Vagina (tissue), 2 donors: ENCODE measurements at regions of chr1 and their contacts with region 1.

Region 1: GRCh38 chr1:11979851-11980675 is at the start of gene MFN2:
- DNase-seq: peak in 1 of 2 donors; percentile 99
- H3K4me3 ChIP-seq: peak within 1 kb of the TSS; percentile 90 to 96
- H3K27ac ChIP-seq: peak within 1 kb of the TSS; percentile 96
- H3K4me1 ChIP-seq: peaks cover 46% of the 10 kb centered on the region
- H3K27me3 ChIP-seq: no peaks in the 10 kb centered on the region
- CTCF ChIP-seq: no peak
- POLR2A ChIP-seq: peak in 1 of 2 donors; percentile 18
- total RNA-seq, gene MFN2: 61.6 TPM

Region 2: DNA sequence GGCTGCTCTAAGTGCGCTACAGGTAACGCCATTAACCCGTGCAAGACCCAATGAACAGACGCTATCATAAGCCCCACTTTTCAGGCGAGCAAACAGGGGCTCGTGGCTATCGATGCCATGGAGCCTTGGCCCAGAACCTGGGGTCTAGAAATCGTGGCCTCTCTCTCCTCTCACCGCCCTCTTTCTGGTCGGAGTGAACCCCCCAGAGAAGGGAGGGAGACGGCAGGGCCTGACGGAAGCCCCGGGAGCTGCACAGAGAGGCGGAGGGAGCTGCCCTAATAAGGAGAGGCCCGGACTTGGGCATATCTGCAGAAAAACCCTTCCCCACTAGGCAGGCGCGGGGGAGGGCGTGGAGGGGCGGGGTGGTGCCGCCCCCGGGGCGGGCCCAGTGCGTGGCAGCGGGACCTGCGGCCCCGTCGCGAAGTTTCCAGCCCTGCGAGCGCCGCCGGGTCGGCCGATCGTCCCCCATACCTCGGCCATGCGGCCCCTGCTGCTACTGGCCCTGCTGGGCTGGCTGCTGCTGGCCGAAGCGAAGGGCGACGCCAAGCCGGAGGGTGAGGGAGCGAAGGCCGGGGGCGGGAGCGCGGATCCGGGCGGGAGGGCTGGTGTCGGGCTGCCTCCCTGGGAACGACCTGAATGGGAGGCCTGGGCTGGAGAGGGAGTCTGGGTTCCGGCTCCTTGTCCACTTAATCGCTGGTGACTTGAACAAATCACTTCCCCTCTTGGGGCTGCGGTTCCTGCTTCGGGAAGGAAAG is 45.6 kb before region 1 on chr1 and contains the start of gene PLOD1:
- intact Hi-C with region 1: loop called (anchors 2 kb)
- DNase-seq: no peak
- H3K4me3 ChIP-seq: peak within 1 kb of the TSS; percentile 57 to 59
- H3K27ac ChIP-seq: peak within 1 kb of the TSS; percentile 84
- H3K4me1 ChIP-seq: peaks cover 51% of the 10 kb centered on the region
- H3K27me3 ChIP-seq: no peaks in the 10 kb centered on the region
- CTCF ChIP-seq: no peak
- POLR2A ChIP-seq: peak in 1 of 2 donors; percentile 21
- total RNA-seq, gene PLOD1: 42.2 TPM